ENCODE measurements at regions of chr6 and their contacts with region 1.

Region 1: GRCh38 chr6:79233611-79234149 is 802 bp downstream of the HMGN3 start:
- DNase-seq: peak; percentile 73
- H3K4me3 Mint-ChIP-seq: peak overlapping the region; percentile 99
- H3K27ac Mint-ChIP-seq: peak overlapping the region; percentile 96
- H3K4me1 Mint-ChIP-seq: peaks cover 22% of the 10 kb centered on the region
- H3K27me3 Mint-ChIP-seq: no peaks in the 10 kb centered on the region

Region 2: GRCh38 chr6:78867370-78868040 is 366.2 kb before region 1 on chr6 and contains the start of gene IRAK1BP1:
- intact Hi-C with region 1: loop called (anchors 1 kb)
- DNase-seq: peak; percentile 82
- H3K4me3 Mint-ChIP-seq: peak within 1 kb of the TSS; percentile 90
- H3K27ac Mint-ChIP-seq: peak within 1 kb of the TSS; percentile 93
- H3K4me1 Mint-ChIP-seq: peaks cover 12% of the 10 kb centered on the region
- H3K27me3 Mint-ChIP-seq: no peaks in the 10 kb centered on the region
- total RNA-seq, gene IRAK1BP1: 2.3 and 2.6 TPM in 2 replicates

Region 3: DNA sequence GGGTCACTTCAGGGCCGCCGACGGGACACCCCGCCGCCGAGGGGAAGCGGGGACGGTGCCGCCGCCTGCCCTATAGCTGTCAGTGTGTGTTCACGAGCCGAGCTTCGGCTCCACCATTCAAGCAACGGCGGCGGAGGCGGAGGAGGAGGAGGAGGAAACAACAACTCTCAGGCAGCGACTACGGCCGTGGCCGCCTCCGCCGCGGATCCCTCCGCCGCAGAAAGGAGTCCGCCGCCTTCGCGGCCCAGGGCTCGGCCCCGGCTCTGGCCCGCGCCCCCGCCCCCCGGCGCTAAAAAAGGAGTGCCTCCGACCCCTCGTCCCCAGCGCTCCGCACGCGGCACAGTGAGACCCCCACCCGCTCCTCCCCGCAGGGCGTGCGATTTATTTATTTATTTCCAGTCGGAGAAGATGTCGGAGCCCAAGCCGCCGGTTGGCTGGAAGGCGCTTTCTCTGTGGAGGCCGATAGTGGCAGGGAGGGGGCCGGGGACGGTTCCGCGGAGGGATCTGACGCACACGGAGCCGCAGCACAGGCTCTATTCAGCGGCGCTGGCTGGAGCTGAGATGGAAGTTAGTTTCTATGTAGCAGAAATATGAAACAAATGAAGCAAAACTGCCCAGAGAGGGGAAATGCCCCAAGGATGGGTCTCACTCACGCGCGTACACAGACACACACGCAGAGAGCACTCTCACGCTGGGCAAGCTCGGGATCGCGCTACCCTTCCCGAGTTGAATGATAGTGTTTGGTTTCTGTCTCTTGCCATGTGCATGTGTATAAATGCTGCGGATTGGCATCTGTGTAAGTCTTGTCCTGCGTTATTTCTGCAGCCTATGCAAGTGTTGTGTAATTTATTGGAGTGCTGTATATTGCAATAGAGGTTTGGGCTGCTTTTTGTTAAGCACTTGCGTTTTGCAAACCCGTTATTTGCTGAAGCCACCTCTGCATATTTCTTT is 155.3 kb before region 1 on chr6 and contains the start of gene PHIP:
- intact Hi-C with region 1: loop called (anchors 1 kb)
- DNase-seq: peak; percentile 91
- H3K4me3 Mint-ChIP-seq: peak within 1 kb of the TSS; percentile 90
- H3K27ac Mint-ChIP-seq: peak within 1 kb of the TSS; percentile 97
- H3K4me1 Mint-ChIP-seq: peaks cover 35% of the 10 kb centered on the region
- H3K27me3 Mint-ChIP-seq: peaks cover 16% of the 10 kb centered on the region
- total RNA-seq, gene PHIP: 35.2 TPM in 2 replicates

Region 4: DNA sequence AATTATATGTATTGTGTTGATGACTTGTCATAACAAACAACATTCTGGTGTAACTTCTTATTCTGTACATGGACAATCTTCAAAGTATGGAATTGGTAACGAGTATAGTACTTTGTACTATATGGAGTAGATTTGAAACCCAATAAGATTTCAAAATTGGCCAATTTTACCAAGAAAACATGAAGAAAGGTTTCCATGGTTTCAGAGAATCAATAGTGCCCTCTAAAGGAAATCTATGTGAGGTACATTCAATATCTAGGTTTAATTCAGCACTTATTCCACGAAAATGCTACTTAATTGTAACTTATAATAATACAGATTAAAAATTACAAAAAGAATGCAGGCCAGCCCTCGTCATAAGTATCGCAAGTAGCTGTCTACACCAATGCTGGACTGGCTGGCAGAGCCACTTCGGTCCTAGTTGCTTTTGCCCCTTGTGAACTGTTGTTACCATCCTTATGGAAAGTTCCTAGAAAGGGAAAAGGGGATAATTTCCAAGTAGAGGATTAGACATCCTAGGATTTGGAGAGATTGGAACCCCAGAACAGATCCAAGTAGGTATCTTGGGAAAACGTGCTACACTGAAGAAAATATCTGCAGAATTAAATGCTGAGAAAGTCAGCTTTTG is 232.6 kb after region 1 on chr6:
- intact Hi-C with region 1: loop called (anchors 10 kb)
- DNase-seq: no peak
- H3K4me3 Mint-ChIP-seq: no peak overlapping the region
- H3K27ac Mint-ChIP-seq: no peak overlapping the region
- H3K4me1 Mint-ChIP-seq: no peaks in the 10 kb centered on the region
- H3K27me3 Mint-ChIP-seq: peaks cover 3% of the 10 kb centered on the region

Region 5: DNA sequence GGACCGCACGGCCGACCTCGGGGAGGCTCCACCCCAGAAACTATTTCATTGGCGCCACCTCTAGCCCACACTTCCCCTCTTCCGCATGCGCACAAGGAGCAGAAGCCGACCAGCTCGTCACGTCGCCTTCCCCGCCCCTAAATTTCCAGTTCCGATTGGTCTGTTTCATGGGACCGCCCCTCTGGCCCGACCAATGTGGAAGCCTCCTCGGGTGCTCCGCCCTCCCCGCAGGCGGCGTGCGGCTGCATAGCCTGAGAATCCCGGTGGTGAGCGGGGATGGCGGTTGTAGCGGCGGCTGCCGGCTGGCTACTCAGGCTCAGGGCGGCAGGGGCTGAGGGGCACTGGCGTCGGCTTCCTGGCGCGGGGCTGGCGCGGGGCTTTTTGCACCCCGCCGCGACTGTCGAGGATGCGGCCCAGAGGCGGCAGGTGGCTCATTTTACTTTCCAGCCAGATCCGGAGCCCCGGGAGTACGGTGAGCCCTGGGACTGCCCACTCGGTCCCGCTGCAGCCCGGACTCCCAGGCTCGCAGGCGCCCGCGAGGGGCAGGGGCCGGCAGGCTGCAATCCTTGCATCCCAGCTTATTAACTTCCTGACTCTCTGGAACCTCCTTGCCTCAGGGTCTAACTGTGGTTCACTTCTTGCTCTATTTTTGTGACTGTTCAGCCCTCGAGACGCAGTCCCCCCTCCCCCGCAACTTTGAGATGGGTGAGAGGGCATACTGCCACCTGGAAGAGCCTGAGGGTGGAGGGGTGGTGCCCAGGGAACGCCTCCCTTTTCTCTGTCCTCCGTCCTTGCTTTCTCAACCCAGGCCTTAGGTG is 872.9 kb after region 1 on chr6 and contains the start of gene BCKDHB:
- intact Hi-C with region 1: loop called (anchors 10 kb)
- DNase-seq: peak; percentile 98
- H3K4me3 Mint-ChIP-seq: peak within 1 kb of the TSS; percentile 96
- H3K27ac Mint-ChIP-seq: peak within 1 kb of the TSS; percentile 90
- H3K4me1 Mint-ChIP-seq: peaks cover 20% of the 10 kb centered on the region
- H3K27me3 Mint-ChIP-seq: peaks cover 6% of the 10 kb centered on the region
- total RNA-seq, gene BCKDHB: 17.5 and 18.5 TPM in 2 replicates

Measured in activated T-helper 2 cell treated with anti-CD3 and anti-CD28 coated beads, Interferon-gamma antibody, Interleukin-2, Interleukin-4, amounts not matched to agents 10 μg/mL and 5 μg/mL and 100 μg/mL, durations not matched to agents 14 hours and 24 hours and 36 hours (primary cell).